Panc1 (cell line): ENCODE measurements at regions of chr18 and their contacts with region 1.

Region 1: GRCh38 chr18:28177828-28178635 is 1.1 kb upstream of the CDH2 start:
- DNase-seq: no peak
- ATAC-seq: peak; percentile 76
- H3K4me3 ChIP-seq: peak overlapping the region; percentile 59 to 63
- H3K27ac ChIP-seq: no peak overlapping the region
- H3K4me1 ChIP-seq: no peaks in the 10 kb centered on the region; the same call in 1 of the 2 replicates
- H3K27me3 ChIP-seq: no peaks in the 10 kb centered on the region
- CTCF ChIP-seq: no peak

Region 2: GRCh38 chr18:28248653-28249052 is 70.6 kb after region 1 on chr18:
- CTCF ChIA-PET with region 1: no interaction called
- POLR2A ChIA-PET with region 1: interaction called, 12 read pairs
- in situ Hi-C with region 1: no loop called
- intact Hi-C with region 1: no loop called
- DNase-seq: no peak
- ATAC-seq: no peak
- H3K4me3 ChIP-seq: no peak overlapping the region
- H3K27ac ChIP-seq: no peak overlapping the region
- H3K4me1 ChIP-seq: no peaks in the 10 kb centered on the region
- H3K27me3 ChIP-seq: no peaks in the 10 kb centered on the region
- CTCF ChIP-seq: no peak

Region 3: DNA sequence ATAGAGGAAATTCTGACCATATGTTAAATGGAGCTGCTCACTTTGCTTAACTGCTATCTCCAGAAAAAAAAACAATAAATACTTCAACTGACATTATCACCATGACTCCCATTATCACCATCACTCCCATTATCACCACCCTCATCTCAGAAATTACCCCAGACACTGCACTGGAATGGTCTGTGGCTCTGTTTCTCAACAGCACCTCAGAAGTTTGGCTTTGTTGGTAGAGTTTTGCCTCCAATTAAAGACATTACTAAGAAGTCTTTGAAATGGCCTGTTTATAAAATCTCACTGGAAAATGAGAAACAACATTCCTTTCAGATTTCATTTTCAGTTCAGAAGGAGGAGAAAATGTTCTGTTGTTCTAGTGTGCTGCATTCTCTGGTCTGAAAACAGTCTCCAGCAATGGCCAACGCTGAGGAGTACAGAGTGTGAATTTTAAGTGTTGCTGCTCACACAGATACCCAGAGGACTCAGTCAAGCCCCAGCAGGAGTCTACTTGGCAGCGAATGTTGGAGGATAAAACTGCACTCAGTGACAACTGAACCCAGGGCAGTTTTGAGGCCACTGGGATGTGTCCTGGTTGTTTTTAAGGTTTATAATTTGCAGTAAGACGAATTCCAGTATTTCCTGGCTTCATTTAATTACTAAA is 363.4 kb after region 1 on chr18:
- CTCF ChIA-PET with region 1: interaction called, 11 read pairs
- POLR2A ChIA-PET with region 1: no interaction called
- in situ Hi-C with region 1: no loop called
- intact Hi-C with region 1: no loop called
- DNase-seq: no peak
- ATAC-seq: no peak
- H3K4me3 ChIP-seq: no peak overlapping the region
- H3K27ac ChIP-seq: no peak overlapping the region
- H3K4me1 ChIP-seq: no peaks in the 10 kb centered on the region
- H3K27me3 ChIP-seq: no peaks in the 10 kb centered on the region
- CTCF ChIP-seq: no peak